A673 (cell line): ENCODE measurements at regions of chr1 and their contacts with region 1.

Region 1: DNA sequence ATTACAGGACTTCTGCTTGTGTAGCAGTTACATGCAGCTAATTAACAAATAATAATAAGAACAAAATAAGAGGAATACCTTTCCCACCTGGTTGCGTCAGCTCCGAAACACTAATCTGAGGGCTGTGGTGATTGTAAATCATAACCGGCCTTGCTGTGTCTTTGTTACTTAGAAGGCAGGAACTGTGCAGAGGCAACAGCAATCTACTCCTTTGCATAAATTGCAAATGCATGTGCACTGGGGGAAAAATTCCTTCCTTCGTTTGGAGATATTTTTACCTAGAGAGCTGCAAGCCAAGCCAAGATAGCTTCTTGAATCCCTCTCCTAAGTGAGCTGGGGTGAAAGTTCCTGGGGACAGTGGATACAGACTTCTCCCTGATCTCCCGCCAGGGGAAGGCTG is 46.0 kb downstream of the NKAIN1 start:
- DNase-seq: no peak
- H3K4me3 ChIP-seq: no peak overlapping the region
- H3K27ac ChIP-seq: no peak overlapping the region
- H3K4me1 ChIP-seq: no peaks in the 10 kb centered on the region
- H3K27me3 ChIP-seq: no peaks in the 10 kb centered on the region
- CTCF ChIP-seq: no peak

Region 2: DNA sequence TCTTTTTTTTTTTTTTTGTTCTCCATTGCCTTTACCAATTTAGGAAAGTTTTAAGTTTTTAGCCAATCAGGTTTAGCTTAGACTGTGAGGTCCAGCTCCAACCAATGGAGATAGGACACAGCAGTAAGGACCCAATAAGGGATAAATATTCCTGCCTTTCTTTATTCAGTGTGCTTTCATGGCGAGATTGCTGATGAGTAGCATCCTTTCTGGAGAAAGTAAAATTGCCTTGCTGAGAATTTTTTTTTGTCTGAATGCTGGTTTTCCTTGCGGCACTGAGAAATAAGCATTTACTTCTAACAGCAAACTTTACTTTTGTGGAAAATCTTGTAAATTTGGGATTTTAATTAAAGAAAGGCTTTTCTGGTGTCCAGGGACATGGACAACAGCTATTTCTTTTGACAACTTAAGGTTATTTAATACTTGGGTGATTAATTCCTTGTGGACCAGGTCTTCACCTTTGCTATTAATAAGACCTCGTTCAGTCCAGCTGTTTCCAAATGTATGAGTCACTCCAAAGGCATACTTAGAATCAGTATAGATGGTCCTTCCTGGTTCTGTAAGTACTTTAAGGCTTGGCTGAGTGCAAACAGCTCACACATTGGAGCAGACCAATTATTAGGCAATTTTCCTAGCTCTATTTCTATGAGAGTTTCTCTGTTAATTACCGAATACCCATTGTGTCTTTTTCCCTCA is 273.4 kb after region 1 on chr1:
- CTCF ChIA-PET with region 1: no interaction called
- POLR2A ChIA-PET with region 1: interaction called, 11 read pairs
- intact Hi-C with region 1: no loop called
- DNase-seq: no peak
- H3K4me3 ChIP-seq: no peak overlapping the region
- H3K27ac ChIP-seq: no peak overlapping the region
- H3K4me1 ChIP-seq: peaks cover 8% of the 10 kb centered on the region
- H3K27me3 ChIP-seq: no peaks in the 10 kb centered on the region
- CTCF ChIP-seq: no peak